Transverse colon (tissue), 4 donors: ENCODE measurements at regions of chr2 and their contacts with region 1.

Region 1: DNA sequence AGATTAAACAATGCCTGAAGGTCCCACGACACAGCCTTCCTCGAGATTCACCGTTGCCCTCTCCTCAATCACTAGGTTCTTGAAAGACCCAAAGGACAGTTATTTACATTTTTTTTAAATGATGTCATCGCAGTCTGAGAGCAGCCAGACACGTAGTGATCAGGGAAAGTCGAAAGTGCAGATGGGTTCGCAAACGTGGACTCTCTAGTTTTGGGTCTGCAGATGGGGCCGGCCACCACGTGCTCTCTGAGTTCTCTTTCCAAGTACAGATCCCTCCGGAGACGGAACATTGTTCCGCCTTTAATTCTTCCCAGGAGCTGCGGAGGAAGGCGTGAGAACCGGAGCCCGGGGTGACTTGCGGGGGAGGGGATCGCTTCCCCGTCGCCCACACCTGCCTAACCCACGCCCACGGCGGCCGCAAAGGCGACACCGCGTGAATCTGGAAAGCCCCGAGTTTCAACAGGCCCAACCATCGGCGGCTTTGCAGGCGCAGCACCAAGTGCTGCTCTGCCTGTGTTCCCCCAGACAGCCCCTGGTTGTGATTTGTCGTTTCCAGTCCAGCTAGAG is 54.3 kb downstream of the PKDCC start:
- DNase-seq: peak; percentile 78
- H3K4me3 ChIP-seq: peak overlapping the region in 3 of 4 donors; percentile 38 to 52 (median 48)
- H3K27ac ChIP-seq: peak overlapping the region; percentile 80 to 87 (median 82)
- H3K4me1 ChIP-seq: peaks cover 0 to 33% (median 9%) of the 10 kb centered on the region in 4 donors
- H3K27me3 ChIP-seq: no peaks in the 10 kb centered on the region
- CTCF ChIP-seq: no peak
- EP300 ChIP-seq: no peak
- POLR2A ChIP-seq: no peak

Region 2: GRCh38 chr2:42169100-42169873 is 67.2 kb after region 1 on chr2 and contains the start of gene EML4:
- in situ Hi-C with region 1: no loop called
- intact Hi-C with region 1: loop called (anchors 2 kb)
- DNase-seq: peak; percentile 95
- H3K4me3 ChIP-seq: peak within 1 kb of the TSS; percentile 75 to 97 (median 89)
- H3K27ac ChIP-seq: peak within 1 kb of the TSS; percentile 93 to 95 (median 93)
- H3K4me1 ChIP-seq: peaks cover 0 to 46% (median 34%) of the 10 kb centered on the region in 4 donors
- H3K27me3 ChIP-seq: no peaks in the 10 kb centered on the region
- CTCF ChIP-seq: no peak
- EP300 ChIP-seq: no peak
- POLR2A ChIP-seq: peak; percentile 87
- total RNA-seq, gene EML4: 49.7 to 91.5 (median 67.5) TPM

Region 3: GRCh38 chr2:42328148-42328833 is 226.2 kb after region 1 on chr2:
- in situ Hi-C with region 1: loop called in 2 of 4 experiments (anchors 10 to 25 kb)
- intact Hi-C with region 1: loop called (anchors 5 kb)
- DNase-seq: no peak
- H3K4me3 ChIP-seq: no peak overlapping the region
- H3K27ac ChIP-seq: no peak overlapping the region
- H3K4me1 ChIP-seq: no peaks in the 10 kb centered on the region
- H3K27me3 ChIP-seq: no peaks in the 10 kb centered on the region
- CTCF ChIP-seq: peak; percentile 31 to 42 (median 34)
- EP300 ChIP-seq: no peak
- POLR2A ChIP-seq: no peak